HepG2 (cell line): ENCODE measurements at regions of chr14 and their contacts with region 1.

Region 1: GRCh38 chr14:60648934-60649874 is at the start of gene SIX1:
- DNase-seq: peak; percentile 77
- ATAC-seq: peak; percentile 93
- H3K4me3 ChIP-seq: peak within 1 kb of the TSS; percentile 75 to 79 (median 77)
- H3K27ac ChIP-seq: peak within 1 kb of the TSS; percentile 44
- H3K4me1 ChIP-seq: peaks cover 55% of the 10 kb centered on the region
- H3K27me3 ChIP-seq: peaks cover 1 to 27% of the 10 kb centered on the region in 2 experiments; a peak in 4 of 5 replicates
- CTCF ChIP-seq: no peak
- EP300 ChIP-seq: no peak
- POLR2A ChIP-seq: peak; percentile 66 to 86
- RAD21 ChIP-seq: 0 out of 2 replicates have a peak, but pooled peaks have one; percentile 9
- total RNA-seq, gene SIX1: 6.5 and 6.8 TPM in 2 replicates

Region 2: DNA sequence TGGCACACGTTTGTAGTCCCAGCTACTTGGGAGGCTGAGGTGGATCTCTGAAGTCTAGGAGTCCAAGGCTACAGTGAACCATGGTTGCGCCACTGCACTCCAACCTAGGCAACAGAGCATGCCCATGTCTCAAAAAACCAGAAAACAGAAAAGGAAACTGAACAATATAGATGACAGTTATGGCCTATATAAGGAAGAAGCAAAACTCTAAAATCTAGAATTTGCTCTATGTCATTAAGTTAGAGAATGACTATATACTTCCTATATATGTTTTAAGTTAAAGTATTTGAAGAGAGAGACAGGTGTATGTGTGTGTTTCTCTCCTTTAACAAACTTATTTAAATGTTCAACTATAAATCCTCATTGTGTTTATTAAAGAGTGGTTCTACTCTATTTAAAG is 151.2 kb after region 1 on chr14:
- CTCF ChIA-PET with region 1: no interaction called
- POLR2A ChIA-PET with region 1: no interaction called
- in situ Hi-C with region 1: no loop called
- intact Hi-C with region 1: no loop called
- DNase-seq: no peak
- ATAC-seq: no peak
- H3K4me3 ChIP-seq: no peak overlapping the region
- H3K27ac ChIP-seq: no peak overlapping the region
- H3K4me1 ChIP-seq: no peaks in the 10 kb centered on the region
- H3K27me3 ChIP-seq: no peaks in the 10 kb centered on the region
- CTCF ChIP-seq: no peak
- EP300 ChIP-seq: no peak
- POLR2A ChIP-seq: no peak
- RAD21 ChIP-seq: no peak

Region 3: DNA sequence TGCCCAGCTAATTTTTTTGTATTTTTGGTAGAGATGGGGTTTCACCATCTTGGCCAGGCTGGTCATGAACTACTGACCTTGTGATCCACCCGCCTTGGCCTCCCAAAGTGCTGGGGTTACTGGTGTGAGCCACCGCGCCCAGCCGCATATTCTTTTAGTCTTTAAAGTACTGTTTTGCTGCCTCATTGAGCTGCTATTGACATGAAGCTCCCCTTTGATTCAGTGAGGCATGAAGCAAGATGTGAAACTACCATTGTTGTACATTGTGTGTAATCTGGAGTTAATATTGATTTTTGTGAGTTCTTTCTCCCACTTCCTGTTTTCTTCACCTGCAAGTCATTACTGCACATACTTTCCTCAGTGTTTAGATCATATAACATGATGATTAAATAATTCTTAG is 166.2 kb after region 1 on chr14:
- CTCF ChIA-PET with region 1: no interaction called
- POLR2A ChIA-PET with region 1: no interaction called
- in situ Hi-C with region 1: no loop called
- intact Hi-C with region 1: loop called (anchors 5 kb)
- DNase-seq: peak; percentile 89
- ATAC-seq: peak; percentile 90
- H3K4me3 ChIP-seq: no peak overlapping the region
- H3K27ac ChIP-seq: peak overlapping the region; percentile 59
- H3K4me1 ChIP-seq: peaks cover 49% of the 10 kb centered on the region
- H3K27me3 ChIP-seq: no peaks in the 10 kb centered on the region
- CTCF ChIP-seq: no peak
- EP300 ChIP-seq: peak in 1 of 2 experiments; percentile 82; a peak in 2 of 4 replicates
- POLR2A ChIP-seq: no peak
- RAD21 ChIP-seq: no peak

Region 4: DNA sequence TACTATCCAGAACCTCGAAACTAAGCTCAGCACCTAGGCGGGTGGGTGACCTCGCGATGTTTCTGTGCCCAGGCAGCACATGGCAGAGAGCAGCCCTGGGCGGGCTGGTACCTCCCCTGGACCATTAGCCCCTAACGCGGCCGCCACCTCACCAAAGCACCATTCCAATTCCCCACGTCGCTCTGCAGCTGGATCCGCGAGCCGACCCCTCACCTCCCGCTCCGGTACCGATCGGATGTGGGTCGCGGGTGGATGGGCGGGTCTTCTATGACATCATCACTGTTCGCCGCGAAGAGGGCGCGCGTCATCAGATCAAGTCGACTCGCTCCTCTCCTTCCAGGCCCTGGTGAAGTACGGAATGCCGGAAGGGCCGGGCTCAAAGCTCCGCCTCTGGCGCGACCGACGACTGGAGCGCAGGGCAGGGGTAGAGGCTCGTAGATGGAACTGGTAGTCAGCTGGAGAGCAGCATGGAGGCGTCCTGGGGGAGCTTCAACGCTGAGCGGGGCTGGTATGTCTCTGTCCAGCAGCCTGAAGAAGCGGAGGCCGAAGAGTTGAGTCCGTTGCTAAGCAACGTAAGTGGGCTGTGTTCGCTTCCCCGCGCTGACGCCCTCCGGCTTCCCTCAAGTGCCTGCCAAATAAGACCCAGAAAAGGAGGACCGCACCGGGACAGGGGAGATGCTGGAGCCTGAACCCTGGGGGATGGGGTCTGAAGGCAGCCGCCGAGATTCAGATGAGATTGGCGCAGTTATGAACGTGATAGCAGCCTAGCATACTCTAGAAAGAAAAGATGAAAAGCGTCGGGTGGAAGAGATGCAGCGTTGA is 331.8 kb after region 1 on chr14 and contains the starts of genes SLC38A6 and TRMT5:
- CTCF ChIA-PET with region 1: no interaction called
- POLR2A ChIA-PET with region 1: interaction called, 5 read pairs
- in situ Hi-C with region 1: no loop called
- intact Hi-C with region 1: loop called (anchors 2 kb)
- DNase-seq: peak; percentile 91
- ATAC-seq: peak; percentile 97
- H3K4me3 ChIP-seq: peak within 1 kb of the TSS; percentile 62 to 93 (median 90)
- H3K27ac ChIP-seq: peak within 1 kb of the TSS; percentile 82
- H3K4me1 ChIP-seq: peaks cover 44% of the 10 kb centered on the region
- H3K27me3 ChIP-seq: no peaks in the 10 kb centered on the region; a peak in 1 of 5 replicates
- CTCF ChIP-seq: 0 out of 2 replicates have a peak, but pooled peaks have one; percentile 13
- EP300 ChIP-seq: peak; percentile 16 to 43; a peak in 2 of 4 replicates
- POLR2A ChIP-seq: peak; percentile 71 to 90
- RAD21 ChIP-seq: peak; percentile 19; the same call in 1 of the 2 replicates
- total RNA-seq, gene SLC38A6: 12.4 and 22.1 TPM in 2 replicates
- total RNA-seq, gene TRMT5: 16.0 and 26.0 TPM in 2 replicates

Region 5: GRCh38 chr14:61025251-61026223 is 376.3 kb after region 1 on chr14:
- CTCF ChIA-PET with region 1: no interaction called
- POLR2A ChIA-PET with region 1: no interaction called
- in situ Hi-C with region 1: no loop called
- intact Hi-C with region 1: loop called (anchors 5 kb)
- DNase-seq: peak; percentile 57
- ATAC-seq: peak; percentile 59; the same call in 2 of the 3 replicates
- H3K4me3 ChIP-seq: no peak overlapping the region
- H3K27ac ChIP-seq: no peak overlapping the region
- H3K4me1 ChIP-seq: peaks cover 10% of the 10 kb centered on the region; the same call in 1 of the 2 replicates
- H3K27me3 ChIP-seq: no peaks in the 10 kb centered on the region
- CTCF ChIP-seq: peak; percentile 80
- EP300 ChIP-seq: no peak
- POLR2A ChIP-seq: no peak
- RAD21 ChIP-seq: peak; percentile 61

Region 6: GRCh38 chr14:61321385-61322010 is 672.3 kb after region 1 on chr14 and contains the start of gene PRKCH:
- CTCF ChIA-PET with region 1: no interaction called
- POLR2A ChIA-PET with region 1: no interaction called
- in situ Hi-C with region 1: no loop called
- intact Hi-C with region 1: no loop called
- DNase-seq: peak; percentile 11
- ATAC-seq: peak; percentile 86
- H3K4me3 ChIP-seq: peak within 1 kb of the TSS; percentile 40 to 69 (median 50); a peak in 4 of 6 replicates
- H3K27ac ChIP-seq: no peak within 1 kb of the TSS
- H3K4me1 ChIP-seq: no peaks in the 10 kb centered on the region
- H3K27me3 ChIP-seq: peaks cover 0 to 17% of the 10 kb centered on the region in 2 experiments; a peak in 2 of 5 replicates
- CTCF ChIP-seq: peak; percentile 51
- EP300 ChIP-seq: no peak
- POLR2A ChIP-seq: no peak
- RAD21 ChIP-seq: no peak
- total RNA-seq, gene PRKCH: 1.3 and 1.9 TPM in 2 replicates